K562 (cell line): ENCODE measurements at regions of chr12 and their contacts with region 1.

Region 1: GRCh38 chr12:92784795-92785562 is 82.2 kb downstream of the PLEKHG7 start:
- DNase-seq: peak; percentile 67 to 77 (median 72)
- ATAC-seq: peak; percentile 100
- H3K4me3 ChIP-seq: no peak overlapping the region
- H3K27ac ChIP-seq: no peak overlapping the region
- H3K4me1 ChIP-seq: no peaks in the 10 kb centered on the region
- H3K27me3 ChIP-seq: no peaks in the 10 kb centered on the region
- CTCF ChIP-seq: peak; percentile 57 to 78 (median 62)
- EP300 ChIP-seq: no peak
- POLR2A ChIP-seq: no peak
- RAD21 ChIP-seq: peak; percentile 87 to 92

Region 2: DNA sequence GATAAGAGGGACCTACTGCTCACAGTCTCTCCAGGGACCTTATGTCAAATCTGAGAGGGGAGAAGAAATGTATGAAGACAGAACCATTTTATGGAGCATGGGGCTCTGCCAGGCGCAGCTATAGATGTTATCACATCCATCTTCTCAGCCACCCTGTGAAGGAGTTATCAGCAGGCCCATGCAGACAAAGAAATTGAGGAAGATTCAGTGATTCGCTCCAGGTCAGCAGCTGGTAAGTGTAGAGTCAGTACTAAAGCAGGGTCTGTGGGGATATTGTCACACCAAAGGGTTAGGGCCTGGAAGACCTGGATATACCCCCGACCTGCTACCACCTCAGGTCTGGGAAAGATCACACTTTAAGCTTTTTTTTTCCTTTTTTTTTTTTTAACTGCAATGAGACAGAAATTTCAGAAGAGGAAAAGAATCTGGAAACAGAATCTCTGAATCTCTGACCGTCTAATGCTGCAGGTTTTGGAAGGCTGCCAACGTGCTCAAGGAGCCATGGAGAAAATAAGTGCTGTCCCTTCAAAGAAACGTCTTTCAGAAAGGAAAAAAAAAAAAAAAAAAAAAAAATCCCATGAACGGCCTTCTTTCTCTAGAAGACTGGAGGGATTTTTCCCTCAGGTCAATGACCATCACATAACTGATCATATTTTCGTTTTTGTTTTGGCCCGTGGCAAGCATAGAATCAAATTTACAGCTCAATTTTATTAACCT is 155.5 kb before region 1 on chr12:
- CTCF ChIA-PET with region 1: no interaction called
- POLR2A ChIA-PET with region 1: no interaction called
- in situ Hi-C with region 1: no loop called
- intact Hi-C with region 1: no loop called
- DNase-seq: peak in 1 of 4 experiments; percentile 6
- ATAC-seq: no peak
- H3K4me3 ChIP-seq: no peak overlapping the region
- H3K27ac ChIP-seq: no peak overlapping the region
- H3K4me1 ChIP-seq: no peaks in the 10 kb centered on the region
- H3K27me3 ChIP-seq: peaks cover 13 to 29% of the 10 kb centered on the region in 2 experiments; a peak in 4 of 5 replicates
- CTCF ChIP-seq: no peak
- EP300 ChIP-seq: no peak
- POLR2A ChIP-seq: no peak
- RAD21 ChIP-seq: no peak

Region 3: DNA sequence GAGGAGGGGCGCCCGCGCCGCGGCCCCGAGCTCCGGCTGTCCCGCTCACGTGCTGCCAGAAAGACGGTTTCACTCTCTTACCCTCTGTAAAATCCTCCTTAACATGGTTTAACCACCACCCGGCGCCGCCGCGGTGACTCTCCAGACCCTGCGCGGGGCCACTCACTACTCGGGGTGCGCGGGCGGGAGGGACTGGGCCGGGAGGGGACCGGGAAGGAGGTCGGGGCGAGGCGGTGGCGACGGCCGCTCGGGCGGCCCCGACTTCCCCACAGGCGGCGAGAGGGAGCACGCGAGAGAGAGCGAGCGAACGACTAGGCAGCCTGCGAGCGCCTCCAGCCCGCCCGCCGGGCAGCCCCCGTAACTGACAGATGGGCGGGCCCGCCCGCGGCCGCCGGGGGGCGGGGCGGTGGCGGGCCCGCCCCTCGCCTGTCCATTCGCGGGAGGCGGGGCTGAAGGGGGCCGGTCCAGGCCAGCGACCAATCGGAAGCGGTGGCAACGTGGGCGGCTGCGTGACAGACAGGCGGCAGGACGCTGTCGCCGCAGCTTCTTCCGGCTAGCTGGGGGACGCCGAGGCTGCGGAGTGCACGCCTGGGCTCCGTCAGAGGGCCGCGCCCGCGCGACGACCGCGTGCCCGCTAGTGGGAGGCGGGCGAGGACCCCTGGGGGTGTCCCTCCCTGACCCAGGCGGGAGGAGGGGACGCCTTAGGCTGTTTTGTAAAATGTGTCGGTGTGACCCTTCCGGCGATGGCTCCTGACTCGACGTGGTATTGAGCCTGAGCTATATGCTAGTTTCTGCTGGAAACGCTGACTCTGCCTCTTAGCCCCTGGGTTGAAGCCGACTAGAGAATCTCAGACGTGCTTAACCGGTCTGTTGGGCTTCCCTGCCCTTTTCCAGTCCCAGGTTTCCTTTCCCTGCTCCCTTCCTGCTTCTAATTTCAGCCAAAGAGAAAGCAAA is 144.3 kb after region 1 on chr12 and contains the start of gene EEA1:
- CTCF ChIA-PET with region 1: no interaction called
- POLR2A ChIA-PET with region 1: no interaction called
- in situ Hi-C with region 1: no loop called
- intact Hi-C with region 1: loop called (anchors 5 kb)
- DNase-seq: peak; percentile 97 to 99 (median 99)
- ATAC-seq: peak; percentile 96
- H3K4me3 ChIP-seq: peak within 1 kb of the TSS; percentile 74
- H3K27ac ChIP-seq: peak within 1 kb of the TSS; percentile 96
- H3K4me1 ChIP-seq: peaks cover 8 to 15% of the 10 kb centered on the region in 2 experiments; a peak in 3 of 5 replicates
- H3K27me3 ChIP-seq: no peaks in the 10 kb centered on the region
- CTCF ChIP-seq: peak in 2 of 3 experiments; percentile 52 to 75; a peak in 4 of 6 replicates
- EP300 ChIP-seq: no peak
- POLR2A ChIP-seq: peak; percentile 92
- RAD21 ChIP-seq: peak; percentile 20 to 30; a peak in 3 of 4 replicates
- polyA plus RNA-seq, gene EEA1: 3.5 to 4.8 TPM

Region 4: DNA sequence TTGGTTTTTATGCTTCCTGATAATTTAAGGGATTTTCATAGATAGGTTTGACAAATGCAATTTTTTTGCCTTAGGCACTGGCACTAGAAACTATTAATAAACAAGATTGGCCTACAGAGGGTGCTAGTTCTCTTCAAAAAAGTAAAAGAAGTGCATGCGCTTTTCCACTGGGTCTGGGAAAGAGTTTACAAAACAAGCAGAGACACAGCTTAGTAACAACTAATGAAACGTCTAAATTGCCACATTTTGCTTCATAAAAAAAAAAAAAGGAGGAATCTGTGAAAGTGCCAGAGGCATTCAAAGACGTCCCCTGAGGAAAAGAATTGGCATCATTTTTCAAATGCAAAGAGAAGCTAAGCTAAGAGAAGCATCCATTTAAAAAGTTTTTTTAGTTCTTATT is 202.4 kb after region 1 on chr12:
- CTCF ChIA-PET with region 1: no interaction called
- POLR2A ChIA-PET with region 1: no interaction called
- in situ Hi-C with region 1: no loop called
- intact Hi-C with region 1: loop called (anchors 10 kb)
- DNase-seq: peak; percentile 48 to 76 (median 56)
- ATAC-seq: peak; percentile 91
- H3K4me3 ChIP-seq: no peak overlapping the region
- H3K27ac ChIP-seq: no peak overlapping the region
- H3K4me1 ChIP-seq: peaks cover 0 to 12% of the 10 kb centered on the region in 2 experiments; a peak in 1 of 5 replicates
- H3K27me3 ChIP-seq: no peaks in the 10 kb centered on the region
- CTCF ChIP-seq: peak; percentile 42 to 80 (median 47); a peak in 4 of 6 replicates
- EP300 ChIP-seq: no peak
- POLR2A ChIP-seq: no peak
- RAD21 ChIP-seq: peak; percentile 85 to 88

Region 5: DNA sequence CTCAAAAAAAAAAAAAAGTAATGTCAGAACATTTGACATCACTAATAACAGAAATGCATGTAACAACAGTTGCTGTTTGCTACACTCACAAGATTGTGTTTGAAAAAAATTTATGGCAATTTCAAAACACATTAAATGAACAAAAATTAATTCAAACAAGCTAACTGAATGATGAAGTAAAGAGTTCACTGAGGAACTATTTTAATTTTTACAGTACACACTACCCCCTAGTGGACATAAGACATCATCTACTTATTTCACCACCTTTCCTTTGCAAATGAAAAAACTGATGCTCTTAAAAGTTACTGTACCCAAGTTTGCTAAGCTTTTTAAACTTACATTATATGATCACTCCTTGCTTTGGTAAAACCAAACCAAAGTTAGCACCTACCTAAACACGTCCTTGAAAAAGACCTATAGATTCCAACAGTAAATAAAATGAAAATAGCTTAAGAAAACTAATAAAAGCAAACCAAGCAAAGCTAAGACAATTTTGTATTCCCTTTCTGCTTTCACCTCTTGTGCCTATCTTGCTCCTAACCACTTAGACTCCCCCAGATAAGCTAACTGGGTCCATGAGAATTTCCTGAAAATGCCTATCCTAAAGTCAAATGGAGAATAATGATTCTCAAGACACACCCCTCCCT is 634.5 kb after region 1 on chr12:
- CTCF ChIA-PET with region 1: interaction called, 11 read pairs
- POLR2A ChIA-PET with region 1: no interaction called
- in situ Hi-C with region 1: loop called (anchors 25 kb)
- intact Hi-C with region 1: loop called (anchors 5 kb)
- DNase-seq: peak; percentile 34 to 53 (median 46)
- ATAC-seq: peak; percentile 77
- H3K4me3 ChIP-seq: no peak overlapping the region
- H3K27ac ChIP-seq: no peak overlapping the region
- H3K4me1 ChIP-seq: peaks cover 3 to 14% of the 10 kb centered on the region in 2 experiments; a peak in 2 of 5 replicates
- H3K27me3 ChIP-seq: no peaks in the 10 kb centered on the region
- CTCF ChIP-seq: peak; percentile 7 to 71 (median 27); a peak in 4 of 6 replicates
- EP300 ChIP-seq: no peak
- POLR2A ChIP-seq: no peak
- RAD21 ChIP-seq: peak; percentile 65 to 77